Activated naive CD4-positive, alpha-beta T cell treated with anti-CD3 and anti-CD28 coated beads, Interleukin-2, amount 10 ng/mL, durations not matched to agents 7 days and 5 days (primary cell): ENCODE measurements at regions of chr3 and their contacts with region 1.

Region 1: GRCh38 chr3:51682079-51682478 is 11.0 kb downstream of the TEX264 start:
- DNase-seq: peak; percentile 86
- H3K4me3 Mint-ChIP-seq: peak overlapping the region; percentile 52
- H3K27ac Mint-ChIP-seq: peak overlapping the region; percentile 86
- H3K4me1 Mint-ChIP-seq: peaks cover 99% of the 10 kb centered on the region
- H3K27me3 Mint-ChIP-seq: no peaks in the 10 kb centered on the region

Region 2: DNA sequence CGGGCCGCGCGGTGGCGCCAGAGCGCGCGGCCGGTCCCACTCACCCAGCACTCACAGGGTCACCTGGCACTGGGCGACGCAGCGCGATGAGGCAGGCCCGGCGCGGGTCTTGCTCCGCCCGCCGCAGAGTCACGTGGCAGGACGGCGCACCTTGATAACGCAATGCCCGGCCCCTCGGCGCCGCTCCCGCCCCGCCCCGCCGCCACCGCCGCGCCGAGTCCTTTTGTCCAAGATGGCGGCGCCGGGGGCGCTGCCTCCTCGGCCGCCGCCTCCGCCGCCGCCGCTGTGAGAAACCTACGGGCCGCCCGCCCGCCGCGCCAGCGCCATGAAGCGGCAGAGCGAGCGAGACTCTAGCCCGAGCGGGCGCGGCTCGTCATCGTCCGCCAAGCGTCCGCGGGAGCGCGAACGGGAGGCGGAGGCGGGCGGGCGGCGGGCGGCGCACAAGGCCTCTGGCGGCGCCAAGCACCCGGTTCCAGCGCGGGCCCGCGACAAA is 291.0 kb before region 1 on chr3 and contains the start of gene RBM15B:
- CTCF ChIA-PET with region 1: interaction called, 40 read pairs
- DNase-seq: peak; percentile 98
- H3K4me3 Mint-ChIP-seq: peak within 1 kb of the TSS; percentile 82
- H3K27ac Mint-ChIP-seq: peak within 1 kb of the TSS; percentile 93
- H3K4me1 Mint-ChIP-seq: peaks cover 78% of the 10 kb centered on the region
- H3K27me3 Mint-ChIP-seq: no peaks in the 10 kb centered on the region

Region 3: DNA sequence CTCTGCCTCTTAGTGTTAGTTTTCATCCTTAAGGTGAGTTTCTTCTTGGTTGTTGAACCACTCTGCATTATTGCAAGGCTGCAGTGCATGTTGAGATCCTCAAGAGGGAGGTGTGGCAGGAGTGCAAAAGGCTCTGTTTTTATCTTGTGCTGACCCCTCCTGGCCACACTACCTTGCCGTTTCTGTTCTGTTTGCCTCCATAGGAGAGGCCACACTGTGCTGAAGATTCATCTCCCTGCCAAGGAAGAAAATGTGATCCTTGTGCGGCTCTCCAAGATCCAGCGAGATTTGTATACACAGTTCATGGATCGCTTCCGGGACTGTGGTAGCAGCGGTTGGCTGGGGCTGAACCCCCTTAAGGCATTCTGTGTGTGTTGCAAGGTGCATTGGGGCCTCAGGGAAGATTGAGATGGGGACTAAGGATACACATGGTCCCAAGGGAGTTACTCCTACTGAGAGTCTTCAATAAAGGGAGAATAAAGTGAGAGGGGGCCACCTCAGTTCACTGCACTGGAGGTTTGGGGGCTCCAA is 44.1 kb before region 1 on chr3:
- CTCF ChIA-PET with region 1: interaction called, 71 read pairs
- DNase-seq: peak; percentile 69
- H3K4me3 Mint-ChIP-seq: no peak overlapping the region
- H3K27ac Mint-ChIP-seq: no peak overlapping the region
- H3K4me1 Mint-ChIP-seq: no peaks in the 10 kb centered on the region
- H3K27me3 Mint-ChIP-seq: no peaks in the 10 kb centered on the region

Region 4: GRCh38 chr3:51646091-51646490 is 36.0 kb before region 1 on chr3:
- CTCF ChIA-PET with region 1: interaction called, 71 read pairs
- DNase-seq: no peak
- H3K4me3 Mint-ChIP-seq: no peak overlapping the region
- H3K27ac Mint-ChIP-seq: no peak overlapping the region
- H3K4me1 Mint-ChIP-seq: no peaks in the 10 kb centered on the region
- H3K27me3 Mint-ChIP-seq: no peaks in the 10 kb centered on the region

Region 5: GRCh38 chr3:51670823-51671733 is 11.0 kb before region 1 on chr3 and contains the start of gene TEX264:
- CTCF ChIA-PET with region 1: interaction called, 111 read pairs
- DNase-seq: peak; percentile 95
- H3K4me3 Mint-ChIP-seq: peak within 1 kb of the TSS; percentile 84
- H3K27ac Mint-ChIP-seq: peak within 1 kb of the TSS; percentile 90
- H3K4me1 Mint-ChIP-seq: peaks cover 76% of the 10 kb centered on the region
- H3K27me3 Mint-ChIP-seq: no peaks in the 10 kb centered on the region

Region 6: DNA sequence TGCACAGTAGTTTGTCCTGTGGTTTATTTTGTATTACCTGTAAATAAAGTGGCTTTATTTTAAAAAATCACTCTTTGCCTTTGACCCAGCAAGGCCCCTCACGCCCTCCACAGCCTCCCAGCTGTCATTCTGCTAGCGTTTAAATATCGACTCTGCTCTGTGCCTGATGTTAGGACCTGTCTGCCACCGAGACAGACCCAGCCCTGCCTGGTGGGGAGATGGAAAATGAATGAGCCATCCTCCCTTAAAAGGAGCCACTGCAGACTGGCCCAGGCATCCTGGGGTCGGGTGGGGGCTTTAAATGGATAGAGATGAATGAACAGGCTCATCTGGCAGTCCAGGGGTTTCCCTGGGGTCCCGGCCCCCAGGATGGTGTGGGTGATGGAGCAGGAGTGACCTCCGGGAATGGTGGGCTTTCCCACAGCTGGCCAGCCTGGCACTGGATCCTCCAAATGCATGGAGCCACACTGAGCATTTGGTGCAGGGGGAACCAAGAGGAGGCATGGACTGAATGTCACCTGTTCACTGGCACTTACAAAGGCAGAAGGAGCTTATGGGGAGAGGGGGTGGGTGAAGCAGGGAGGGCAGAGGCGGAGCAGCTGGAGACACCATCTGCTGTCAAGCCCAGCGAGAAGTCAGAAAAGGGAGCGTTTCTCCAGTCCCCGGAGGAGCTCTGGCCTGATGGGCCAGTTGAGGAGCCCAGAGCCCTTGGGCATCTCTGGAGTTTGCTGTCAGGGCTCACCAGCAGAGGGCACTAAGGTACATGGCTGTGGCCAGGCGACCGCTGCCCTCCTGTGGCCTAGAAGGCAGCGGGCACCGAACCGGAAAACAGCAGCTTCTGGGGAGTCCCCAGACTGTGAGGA is 36.7 kb after region 1 on chr3:
- CTCF ChIA-PET with region 1: interaction called, 11 read pairs
- DNase-seq: peak; percentile 85
- H3K4me3 Mint-ChIP-seq: no peak overlapping the region
- H3K27ac Mint-ChIP-seq: peak overlapping the region; percentile 26
- H3K4me1 Mint-ChIP-seq: peaks cover 36% of the 10 kb centered on the region
- H3K27me3 Mint-ChIP-seq: no peaks in the 10 kb centered on the region

Region 7: DNA sequence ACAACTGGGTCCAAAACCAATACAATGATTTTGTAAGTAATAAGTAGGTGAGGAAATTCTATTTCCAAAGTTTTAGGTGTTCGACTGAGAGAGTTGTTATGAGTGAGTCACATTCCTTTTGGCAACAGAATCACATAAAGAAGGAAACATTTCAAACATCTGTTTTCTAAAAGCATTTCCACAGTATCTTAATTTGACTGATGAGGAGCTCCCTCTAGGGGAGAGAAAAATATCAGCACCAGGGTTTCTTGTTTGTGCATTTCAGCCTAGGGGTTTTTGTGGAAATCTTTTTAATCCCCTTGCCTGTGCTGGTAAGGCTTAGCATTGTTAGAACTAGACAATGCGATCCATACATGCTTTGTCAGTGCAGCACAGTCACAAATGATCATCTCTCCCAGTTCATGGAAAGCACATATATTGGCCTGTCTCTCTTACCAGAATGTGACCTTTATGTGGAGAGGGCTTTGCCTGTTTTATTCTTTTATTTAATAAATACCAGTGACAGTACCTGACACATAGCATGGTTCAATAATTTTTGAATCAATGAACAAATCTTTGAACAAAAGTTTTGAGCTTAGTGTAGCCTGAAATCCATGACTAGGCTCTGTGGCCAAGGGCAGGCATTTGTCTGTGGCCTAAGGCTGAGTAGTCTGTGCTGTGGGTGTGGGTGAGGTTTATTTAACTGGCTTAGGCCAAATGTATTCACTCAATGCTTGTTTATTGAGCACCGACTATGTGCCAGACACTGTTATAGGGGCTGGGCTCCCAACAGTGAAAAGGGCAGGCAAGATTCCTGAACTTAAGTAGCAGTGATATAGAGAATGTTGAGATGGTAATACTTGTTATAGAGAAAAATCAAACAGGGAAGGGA is 118.0 kb after region 1 on chr3:
- CTCF ChIA-PET with region 1: interaction called, 11 read pairs
- DNase-seq: peak; percentile 33
- H3K4me3 Mint-ChIP-seq: no peak overlapping the region
- H3K27ac Mint-ChIP-seq: no peak overlapping the region
- H3K4me1 Mint-ChIP-seq: peaks cover 42% of the 10 kb centered on the region
- H3K27me3 Mint-ChIP-seq: peaks cover 13% of the 10 kb centered on the region